GM10248 (cell line): ENCODE measurements at regions of chr19 and their contacts with region 1.

Region 1: GRCh38 chr19:33125929-33126388 is 6.0 kb upstream of the WDR88 start:
- DNase-seq: peak; percentile 81
- CTCF ChIP-seq: peak; percentile 81

Region 2: DNA sequence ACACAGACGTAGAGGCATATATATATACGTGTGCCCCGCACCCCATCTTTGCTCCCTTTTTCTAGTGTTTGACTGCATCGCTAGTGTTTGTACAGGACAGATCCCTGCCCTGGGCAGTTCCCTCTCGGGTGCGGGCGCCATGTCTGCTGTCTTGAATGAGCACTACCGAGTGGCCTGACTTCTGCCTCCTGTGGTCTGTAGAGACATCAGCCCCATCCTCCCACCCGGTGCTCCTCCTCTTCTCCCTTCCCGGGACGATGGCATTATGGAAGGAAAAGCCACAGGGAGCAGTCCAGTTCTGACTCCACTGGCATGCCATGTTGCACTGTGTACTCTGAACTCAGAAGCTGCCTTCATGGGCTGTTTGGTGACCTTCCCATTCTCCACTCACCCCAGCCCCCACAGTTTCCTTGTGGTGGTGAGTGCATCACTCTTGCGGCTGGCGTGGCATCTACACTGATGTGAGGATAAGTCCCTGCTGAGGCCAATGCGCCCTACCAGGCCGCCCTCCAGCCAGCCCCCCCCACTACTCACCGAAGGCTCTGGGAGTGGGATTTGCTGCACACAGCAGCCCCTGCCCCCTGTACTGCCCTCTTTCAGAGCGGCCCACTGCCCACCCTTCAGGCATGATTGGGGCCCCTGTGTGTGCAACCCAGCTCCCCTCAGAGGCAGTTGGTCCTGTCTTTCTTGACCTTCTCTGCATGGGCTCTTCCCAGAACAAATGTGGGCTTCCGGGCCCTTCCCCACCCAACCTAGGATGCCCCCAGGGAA is 381.2 kb before region 1 on chr19:
- CTCF ChIA-PET with region 1: no interaction called
- POLR2A ChIA-PET with region 1: no interaction called
- DNase-seq: no peak
- CTCF ChIP-seq: no peak

Region 3: GRCh38 chr19:33102893-33103292 is 23.1 kb before region 1 on chr19:
- CTCF ChIA-PET with region 1: interaction called, 13 read pairs
- POLR2A ChIA-PET with region 1: no interaction called
- DNase-seq: no peak
- CTCF ChIP-seq: no peak

Region 4: GRCh38 chr19:33143897-33144405 is 18.0 kb after region 1 on chr19:
- CTCF ChIA-PET with region 1: interaction called, 10 read pairs
- POLR2A ChIA-PET with region 1: no interaction called
- DNase-seq: peak; percentile 85
- CTCF ChIP-seq: peak; percentile 94

Region 5: GRCh38 chr19:33186431-33187182 is 60.6 kb after region 1 on chr19:
- CTCF ChIA-PET with region 1: interaction called, 29 read pairs
- POLR2A ChIA-PET with region 1: no interaction called
- DNase-seq: no peak
- CTCF ChIP-seq: no peak